ENCODE measurements at regions of chr16 and their contacts with region 1.

Region 1: GRCh38 chr16:82639666-82640336 is 13.0 kb downstream of the CDH13 start:
- DNase-seq: peak in 3 of 5 donors; percentile 19 to 35 (median 29)
- H3K4me3 ChIP-seq: no peak overlapping the region
- H3K4me3 Mint-ChIP-seq: no peak overlapping the region
- H3K27ac ChIP-seq: no peak overlapping the region
- H3K27ac Mint-ChIP-seq: peak overlapping the region in 1 of 7 donors; percentile 5
- H3K4me1 ChIP-seq: peaks cover 5% of the 10 kb centered on the region
- H3K4me1 Mint-ChIP-seq: peaks cover 4 to 7% (median 5%) of the 10 kb centered on the region in 4 donors
- H3K27me3 ChIP-seq: no peaks in the 10 kb centered on the region
- H3K27me3 Mint-ChIP-seq: no peaks in the 10 kb centered on the region

Region 2: GRCh38 chr16:82664181-82664580 is 24.4 kb after region 1 on chr16:
- CTCF ChIA-PET with region 1: interaction called, 129 read pairs
- POLR2A ChIA-PET with region 1: interaction called, 4 read pairs
- intact Hi-C with region 1: no loop called
- DNase-seq: no peak
- H3K4me3 ChIP-seq: no peak overlapping the region
- H3K4me3 Mint-ChIP-seq: no peak overlapping the region
- H3K27ac ChIP-seq: no peak overlapping the region
- H3K27ac Mint-ChIP-seq: no peak overlapping the region
- H3K4me1 ChIP-seq: peaks cover 19% of the 10 kb centered on the region
- H3K4me1 Mint-ChIP-seq: peaks cover 14 to 23% (median 16%) of the 10 kb centered on the region in 4 donors
- H3K27me3 ChIP-seq: no peaks in the 10 kb centered on the region
- H3K27me3 Mint-ChIP-seq: no peaks in the 10 kb centered on the region

Region 3: GRCh38 chr16:83312010-83312717 is 672.4 kb after region 1 on chr16:
- CTCF ChIA-PET with region 1: no interaction called
- POLR2A ChIA-PET with region 1: no interaction called
- intact Hi-C with region 1: no loop called
- DNase-seq: no peak
- H3K4me3 ChIP-seq: no peak overlapping the region
- H3K4me3 Mint-ChIP-seq: no peak overlapping the region
- H3K27ac ChIP-seq: no peak overlapping the region
- H3K27ac Mint-ChIP-seq: no peak overlapping the region
- H3K4me1 ChIP-seq: no peaks in the 10 kb centered on the region
- H3K4me1 Mint-ChIP-seq: no peaks in the 10 kb centered on the region
- H3K27me3 ChIP-seq: no peaks in the 10 kb centered on the region
- H3K27me3 Mint-ChIP-seq: peaks cover 0 to 7% of the 10 kb centered on the region in 2 donors